ENCODE measurements at regions of chr7 and their contacts with region 1.

Region 1: DNA sequence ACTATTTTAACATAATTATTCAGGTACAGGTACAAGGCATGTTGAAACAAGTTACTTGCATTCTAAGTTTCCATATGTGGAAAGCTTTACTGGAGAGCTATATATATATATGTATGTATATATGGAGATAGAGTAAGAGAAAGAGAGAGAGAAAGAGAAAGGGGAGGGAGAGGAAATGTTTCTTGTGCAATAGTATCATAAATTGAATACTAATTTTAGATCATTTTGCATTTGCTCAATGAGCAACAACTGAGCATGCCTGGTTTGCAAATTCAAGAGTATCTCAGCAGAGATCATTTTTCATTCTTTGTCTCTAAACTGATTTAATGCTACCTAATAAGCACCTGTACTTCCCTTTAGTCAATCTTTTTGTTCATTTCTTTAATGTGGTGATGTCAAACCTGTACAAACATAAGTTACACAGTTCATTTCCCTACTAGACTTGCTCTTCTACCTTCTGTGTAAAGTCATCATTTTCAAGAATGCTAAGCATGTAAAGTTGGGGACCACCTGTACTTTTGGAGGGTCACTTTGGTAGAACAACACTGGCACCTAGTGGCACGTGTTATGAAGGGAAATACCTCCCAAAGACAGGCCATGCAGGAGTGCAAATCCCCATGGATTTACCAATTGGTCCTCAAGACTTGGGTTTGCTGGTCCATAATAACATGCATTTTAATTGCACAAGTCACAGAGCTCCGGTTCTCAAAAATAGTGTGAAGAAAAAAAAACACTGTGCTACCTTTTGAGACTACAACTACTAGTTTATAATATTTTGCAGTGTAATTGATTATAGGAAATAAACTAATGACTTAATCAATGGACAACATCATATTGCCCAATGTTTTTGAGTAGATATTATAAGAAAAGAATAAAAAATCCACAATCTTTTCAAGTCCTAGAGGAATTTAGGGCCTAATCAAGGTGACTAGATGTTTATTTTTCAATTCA is 431.2 kb upstream of the IGFBP3 start:
- DNase-seq: peak; percentile 79
- ATAC-seq: peak; percentile 85
- H3K4me3 ChIP-seq: no peak overlapping the region
- H3K27ac ChIP-seq: no peak overlapping the region
- H3K4me1 ChIP-seq: no peaks in the 10 kb centered on the region
- H3K27me3 ChIP-seq: no peaks in the 10 kb centered on the region
- CTCF ChIP-seq: peak; percentile 91

Region 2: DNA sequence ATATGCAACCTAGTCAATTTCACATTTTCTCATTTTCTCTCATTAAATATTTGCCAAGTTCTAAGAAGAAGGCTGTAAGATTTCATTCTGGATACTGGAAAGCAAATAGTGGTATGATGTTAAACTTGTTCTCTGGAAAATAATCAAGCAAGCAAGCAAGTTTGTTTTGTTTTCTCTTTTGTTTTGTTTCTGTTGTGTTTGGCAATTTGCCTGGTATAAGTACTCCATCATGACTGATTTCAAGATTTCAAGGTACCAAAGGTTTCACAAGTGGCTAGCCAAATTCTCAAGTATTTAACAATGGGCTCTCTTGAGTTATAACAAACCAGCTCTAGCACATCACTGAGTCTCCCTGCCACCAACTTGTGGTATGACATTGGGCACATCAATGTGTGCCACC is 279.6 kb before region 1 on chr7:
- CTCF ChIA-PET with region 1: no interaction called
- POLR2A ChIA-PET with region 1: no interaction called
- intact Hi-C with region 1: no loop called
- DNase-seq: no peak
- ATAC-seq: no peak
- H3K4me3 ChIP-seq: no peak overlapping the region
- H3K27ac ChIP-seq: no peak overlapping the region
- H3K4me1 ChIP-seq: no peaks in the 10 kb centered on the region
- H3K27me3 ChIP-seq: no peaks in the 10 kb centered on the region
- CTCF ChIP-seq: no peak

Region 3: DNA sequence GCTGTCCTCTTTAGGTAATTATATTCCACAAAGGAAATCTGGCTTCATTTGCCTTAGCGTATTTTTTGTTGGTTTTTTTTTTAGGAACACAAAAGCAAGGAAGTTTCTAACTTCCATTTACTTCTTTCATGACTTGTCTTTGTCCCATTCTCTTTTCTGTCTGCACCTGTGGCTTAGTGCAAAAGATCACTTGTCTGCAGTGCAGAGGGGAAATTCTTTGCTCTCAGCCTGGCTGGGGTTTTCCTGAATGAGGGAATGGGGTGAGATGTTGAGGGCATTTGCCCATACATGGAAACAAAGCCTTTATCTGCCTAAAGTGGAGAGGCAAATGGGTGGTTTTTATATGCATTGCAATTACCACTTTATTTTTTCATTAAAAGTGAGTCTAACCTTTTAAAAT is 70.1 kb before region 1 on chr7:
- CTCF ChIA-PET with region 1: no interaction called
- POLR2A ChIA-PET with region 1: no interaction called
- intact Hi-C with region 1: no loop called
- DNase-seq: no peak
- ATAC-seq: no peak
- H3K4me3 ChIP-seq: no peak overlapping the region
- H3K27ac ChIP-seq: no peak overlapping the region
- H3K4me1 ChIP-seq: peaks cover 11% of the 10 kb centered on the region
- H3K27me3 ChIP-seq: no peaks in the 10 kb centered on the region
- CTCF ChIP-seq: no peak

Region 4: DNA sequence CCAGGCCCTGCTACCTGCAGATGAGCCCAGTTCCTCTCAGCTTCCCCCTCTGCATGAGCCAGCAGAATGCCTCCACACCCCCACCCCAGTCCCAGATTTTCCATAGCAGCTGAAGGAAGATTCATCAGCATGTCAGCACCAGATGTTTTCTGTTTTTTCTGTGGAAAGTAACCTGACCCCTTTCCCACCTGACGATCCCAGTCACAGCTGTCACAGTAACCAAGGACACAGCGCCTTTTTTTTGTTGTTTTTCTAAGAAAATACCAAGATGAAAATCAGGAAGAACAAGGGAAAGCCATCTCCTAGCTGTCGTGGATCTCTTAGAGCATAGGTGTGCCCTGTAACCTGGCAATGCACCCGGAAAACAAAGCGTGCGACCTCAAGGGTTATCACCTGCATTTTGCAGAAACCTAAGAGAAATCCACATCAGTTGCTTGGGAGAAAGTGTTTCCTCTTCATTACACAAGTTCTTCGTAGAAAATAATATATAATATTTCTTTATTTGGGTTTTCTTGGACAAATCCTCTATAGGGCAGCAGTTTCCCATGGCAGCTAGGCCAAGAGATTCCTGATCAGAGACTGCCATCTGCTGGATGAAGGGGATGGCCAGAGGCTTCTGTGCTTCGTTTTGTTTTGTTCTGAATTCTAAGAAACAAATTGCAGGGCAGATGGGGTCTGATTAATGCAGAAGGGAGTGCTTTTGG is 827.7 kb after region 1 on chr7:
- CTCF ChIA-PET with region 1: no interaction called
- POLR2A ChIA-PET with region 1: no interaction called
- intact Hi-C with region 1: loop called (anchors 1 kb)
- DNase-seq: peak; percentile 73
- ATAC-seq: peak; percentile 97
- H3K4me3 ChIP-seq: no peak overlapping the region
- H3K27ac ChIP-seq: no peak overlapping the region
- H3K4me1 ChIP-seq: no peaks in the 10 kb centered on the region
- H3K27me3 ChIP-seq: 0 out of 2 replicates have a peak, but pooled peaks cover 5% of the 10 kb centered on the region
- CTCF ChIP-seq: peak; percentile 85

Measured in PC-3 (cell line).